Activated T-helper 2 cell treated with anti-CD3 and anti-CD28 coated beads, Interferon-gamma antibody, Interleukin-2, Interleukin-4, amounts not matched to agents 10 μg/mL and 5 μg/mL and 100 μg/mL, durations not matched to agents 14 hours and 24 hours and 36 hours (primary cell): ENCODE measurements at regions of chr5 and their contacts with region 1.

Region 1: DNA sequence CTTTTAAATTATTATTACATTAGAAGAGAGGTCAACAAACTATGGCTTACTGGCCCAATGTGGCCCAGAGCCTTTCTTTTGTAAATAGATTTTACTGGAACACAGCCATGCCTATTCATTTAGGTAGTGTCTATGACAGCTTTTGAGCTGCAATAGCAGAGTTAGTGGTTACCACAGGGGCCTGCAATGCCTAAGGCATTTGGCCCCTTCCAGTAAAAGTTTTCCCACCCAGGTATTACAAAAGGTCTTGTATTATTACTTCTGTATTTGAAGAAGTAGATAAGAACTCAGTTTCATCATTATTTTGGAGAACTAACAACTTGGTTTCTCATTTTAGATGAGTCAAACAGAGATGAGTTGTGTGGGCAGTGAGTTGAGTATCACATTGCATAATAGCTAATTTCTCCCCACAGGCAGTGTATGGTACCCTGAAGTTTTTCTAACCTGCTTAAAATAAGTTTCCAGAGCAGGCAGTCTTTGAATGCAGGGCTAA is 9.5 kb downstream of the MTRR start:
- DNase-seq: no peak
- H3K4me3 Mint-ChIP-seq: no peak overlapping the region
- H3K27ac Mint-ChIP-seq: peak overlapping the region; percentile 49
- H3K4me1 Mint-ChIP-seq: peaks cover 37% of the 10 kb centered on the region
- H3K27me3 Mint-ChIP-seq: no peaks in the 10 kb centered on the region

Region 2: DNA sequence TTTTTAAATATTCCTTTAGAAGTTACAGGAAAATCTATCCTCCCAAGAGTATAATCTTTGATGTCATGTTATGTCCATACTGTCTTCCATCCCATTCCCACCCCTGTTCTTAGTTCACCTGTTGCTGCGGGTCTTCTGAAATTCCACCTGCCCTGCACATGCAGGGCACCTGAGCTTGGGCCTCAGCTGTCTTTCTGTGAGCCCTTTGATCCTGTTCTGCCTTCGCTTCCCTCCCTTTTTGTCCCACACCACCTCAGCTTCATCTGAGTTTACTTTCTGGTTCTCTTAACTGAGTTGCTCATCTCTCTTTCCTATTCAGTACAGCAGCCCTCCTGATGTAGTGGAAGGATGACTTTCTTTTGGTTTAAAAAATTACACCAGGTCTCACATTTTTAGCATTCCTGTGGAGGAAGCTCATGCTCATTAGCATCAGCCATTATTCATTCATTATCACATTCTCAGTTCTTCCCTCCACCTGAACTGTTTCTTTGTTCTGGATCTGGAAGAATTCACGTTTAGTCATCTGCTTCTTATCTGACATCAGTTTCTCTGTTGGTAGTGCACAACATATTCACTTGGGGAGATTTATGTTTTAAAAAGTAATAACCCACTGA is 271.5 kb before region 1 on chr5:
- intact Hi-C with region 1: no loop called
- DNase-seq: no peak
- H3K4me3 Mint-ChIP-seq: no peak overlapping the region
- H3K27ac Mint-ChIP-seq: no peak overlapping the region
- H3K4me1 Mint-ChIP-seq: no peaks in the 10 kb centered on the region
- H3K27me3 Mint-ChIP-seq: no peaks in the 10 kb centered on the region

Region 3: GRCh38 chr5:7897014-7897632 is 18.7 kb after region 1 on chr5:
- intact Hi-C with region 1: loop called (anchors 1 kb)
- DNase-seq: no peak
- H3K4me3 Mint-ChIP-seq: no peak overlapping the region
- H3K27ac Mint-ChIP-seq: no peak overlapping the region
- H3K4me1 Mint-ChIP-seq: peaks cover 26% of the 10 kb centered on the region
- H3K27me3 Mint-ChIP-seq: no peaks in the 10 kb centered on the region